SK-N-SH (cell line): ENCODE measurements at regions of chrX and their contacts with region 1.

Region 1: DNA sequence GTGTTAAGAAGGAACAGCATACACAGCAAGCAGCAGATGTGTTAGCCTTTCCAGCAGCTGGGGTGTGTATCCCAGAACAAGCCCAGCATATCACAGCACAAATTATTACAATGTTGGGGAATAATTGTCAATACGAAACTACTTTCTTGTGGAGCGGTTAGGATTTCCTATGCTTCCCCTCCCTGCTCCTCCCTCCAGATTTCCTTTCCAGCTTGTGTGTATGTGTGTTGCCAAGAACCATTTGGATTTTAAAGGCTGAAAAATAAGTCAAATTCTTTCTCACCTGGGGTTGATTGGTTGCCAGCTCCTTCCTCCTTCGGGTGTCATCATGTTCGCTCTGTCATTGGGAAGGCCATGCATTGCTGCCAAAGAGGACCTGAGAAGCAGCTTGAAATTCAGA is 178.2 kb upstream of the FRMPD4 start:
- DNase-seq: no peak
- H3K4me3 ChIP-seq: no peak overlapping the region
- H3K27ac ChIP-seq: no peak overlapping the region
- H3K4me1 ChIP-seq: no peaks in the 10 kb centered on the region
- H3K27me3 ChIP-seq: no peaks in the 10 kb centered on the region
- CTCF ChIP-seq: no peak
- EP300 ChIP-seq: no peak
- RAD21 ChIP-seq: no peak

Region 2: DNA sequence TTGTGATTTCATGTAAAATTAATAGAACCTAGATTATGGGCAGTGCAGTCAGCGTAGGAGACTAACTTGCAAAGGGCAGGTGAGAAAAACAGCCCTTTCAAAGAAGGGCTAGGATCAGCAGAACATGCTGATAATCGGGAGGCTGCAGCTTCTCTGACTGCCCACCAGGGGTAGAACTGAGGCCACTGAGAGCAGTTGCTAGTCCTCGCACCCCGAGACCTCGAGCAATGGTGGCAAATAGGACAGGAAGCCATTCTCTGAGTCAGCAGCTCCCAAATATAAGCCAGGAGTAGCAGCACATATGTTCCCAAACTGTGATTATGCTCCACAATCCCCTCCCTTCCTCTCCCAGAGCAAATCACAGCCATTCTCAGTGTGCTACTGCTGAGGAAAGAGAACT is 15.5 kb before region 1 on chrX:
- CTCF ChIA-PET with region 1: interaction called, 11 read pairs
- POLR2A ChIA-PET with region 1: no interaction called
- DNase-seq: peak; percentile 26
- H3K4me3 ChIP-seq: no peak overlapping the region
- H3K27ac ChIP-seq: no peak overlapping the region
- H3K4me1 ChIP-seq: no peaks in the 10 kb centered on the region
- H3K27me3 ChIP-seq: no peaks in the 10 kb centered on the region
- CTCF ChIP-seq: peak; percentile 73
- EP300 ChIP-seq: no peak
- RAD21 ChIP-seq: peak; percentile 61